ENCODE measurements at regions of chr2 and their contacts with region 1.

Region 1: GRCh38 chr2:64523666-64524603 is at the start of gene AFTPH:
- DNase-seq: peak; percentile 99 to 100 (median 99)
- ATAC-seq: peak; percentile 88
- H3K4me3 ChIP-seq: peak within 1 kb of the TSS; percentile 69 to 83
- H3K4me3 Mint-ChIP-seq: peak within 1 kb of the TSS; percentile 99
- H3K27ac ChIP-seq: peak within 1 kb of the TSS; percentile 77 to 89
- H3K27ac Mint-ChIP-seq: peak within 1 kb of the TSS; percentile 99
- H3K4me1 ChIP-seq: peaks cover 20% of the 10 kb centered on the region
- H3K4me1 Mint-ChIP-seq: peaks cover 38% of the 10 kb centered on the region
- H3K27me3 ChIP-seq: no peaks in the 10 kb centered on the region
- H3K27me3 Mint-ChIP-seq: no peaks in the 10 kb centered on the region
- CTCF ChIP-seq: no peak
- total RNA-seq, gene AFTPH: 23.0 to 25.9 TPM

Region 2: GRCh38 chr2:63588385-63589147 is 935.4 kb before region 1 on chr2 and contains the starts of genes MDH1 and WDPCP:
- CTCF ChIA-PET with region 1: no interaction called
- POLR2A ChIA-PET with region 1: no interaction called
- intact Hi-C with region 1: loop called in 1 of 2 experiments (anchors 2 kb)
- DNase-seq: peak; percentile 84 to 99 (median 91)
- ATAC-seq: peak; percentile 83
- H3K4me3 ChIP-seq: peak within 1 kb of the TSS; percentile 83 to 88
- H3K4me3 Mint-ChIP-seq: peak within 1 kb of the TSS; percentile 90
- H3K27ac ChIP-seq: peak within 1 kb of the TSS; percentile 75 to 95
- H3K27ac Mint-ChIP-seq: peak within 1 kb of the TSS; percentile 95
- H3K4me1 ChIP-seq: peaks cover 19% of the 10 kb centered on the region
- H3K4me1 Mint-ChIP-seq: peaks cover 44% of the 10 kb centered on the region
- H3K27me3 ChIP-seq: no peaks in the 10 kb centered on the region
- H3K27me3 Mint-ChIP-seq: no peaks in the 10 kb centered on the region
- CTCF ChIP-seq: no peak
- total RNA-seq, gene MDH1: 87.2 to 94.8 TPM
- total RNA-seq, gene WDPCP: 9.6 to 11.9 TPM

Region 3: DNA sequence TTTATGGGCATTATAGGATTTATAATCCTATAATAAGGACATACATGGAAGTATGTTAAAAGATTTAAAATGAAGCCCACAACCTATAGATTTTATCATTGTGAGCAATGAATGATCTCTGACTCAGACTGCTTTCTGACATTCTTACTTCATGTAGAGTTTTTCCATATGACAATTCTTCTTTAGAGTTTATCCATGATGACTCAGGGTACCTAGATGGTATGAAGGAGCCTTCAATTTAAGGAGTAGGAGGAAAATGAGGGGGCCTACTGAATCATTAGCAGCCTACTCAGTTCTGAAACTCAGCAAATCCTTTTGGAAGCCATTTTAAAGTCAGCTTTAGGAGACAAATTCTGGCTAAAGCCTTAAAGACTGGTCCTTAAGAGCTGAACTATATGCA is 390.1 kb before region 1 on chr2:
- CTCF ChIA-PET with region 1: no interaction called
- POLR2A ChIA-PET with region 1: no interaction called
- intact Hi-C with region 1: no loop called
- DNase-seq: no peak
- ATAC-seq: no peak
- H3K4me3 ChIP-seq: no peak overlapping the region
- H3K4me3 Mint-ChIP-seq: no peak overlapping the region
- H3K27ac ChIP-seq: no peak overlapping the region
- H3K27ac Mint-ChIP-seq: no peak overlapping the region
- H3K4me1 ChIP-seq: peaks cover 39% of the 10 kb centered on the region
- H3K4me1 Mint-ChIP-seq: peaks cover 69% of the 10 kb centered on the region
- H3K27me3 ChIP-seq: no peaks in the 10 kb centered on the region
- H3K27me3 Mint-ChIP-seq: no peaks in the 10 kb centered on the region
- CTCF ChIP-seq: no peak

Region 4: GRCh38 chr2:64479259-64480117 is 44.4 kb before region 1 on chr2:
- CTCF ChIA-PET with region 1: no interaction called
- POLR2A ChIA-PET with region 1: no interaction called
- intact Hi-C with region 1: no loop called
- DNase-seq: no peak
- ATAC-seq: no peak
- H3K4me3 ChIP-seq: no peak overlapping the region
- H3K4me3 Mint-ChIP-seq: no peak overlapping the region
- H3K27ac ChIP-seq: no peak overlapping the region
- H3K27ac Mint-ChIP-seq: no peak overlapping the region
- H3K4me1 ChIP-seq: no peaks in the 10 kb centered on the region
- H3K4me1 Mint-ChIP-seq: peaks cover 7% of the 10 kb centered on the region
- H3K27me3 ChIP-seq: no peaks in the 10 kb centered on the region
- H3K27me3 Mint-ChIP-seq: no peaks in the 10 kb centered on the region
- CTCF ChIP-seq: no peak

Region 5: GRCh38 chr2:64504774-64505720 is 18.9 kb before region 1 on chr2:
- CTCF ChIA-PET with region 1: interaction called, 11 read pairs
- POLR2A ChIA-PET with region 1: interaction called, 3 read pairs
- intact Hi-C with region 1: no loop called
- DNase-seq: no peak
- ATAC-seq: no peak
- H3K4me3 ChIP-seq: no peak overlapping the region
- H3K4me3 Mint-ChIP-seq: no peak overlapping the region
- H3K27ac ChIP-seq: no peak overlapping the region
- H3K27ac Mint-ChIP-seq: no peak overlapping the region
- H3K4me1 ChIP-seq: no peaks in the 10 kb centered on the region
- H3K4me1 Mint-ChIP-seq: no peaks in the 10 kb centered on the region
- H3K27me3 ChIP-seq: no peaks in the 10 kb centered on the region
- H3K27me3 Mint-ChIP-seq: peaks cover 5% of the 10 kb centered on the region
- CTCF ChIP-seq: no peak

Region 6: GRCh38 chr2:64609227-64609941 is 85.4 kb after region 1 on chr2:
- CTCF ChIA-PET with region 1: interaction called, 13 read pairs
- POLR2A ChIA-PET with region 1: interaction called, 13 read pairs
- intact Hi-C with region 1: loop called in 1 of 2 experiments (anchors 1 kb)
- DNase-seq: peak; percentile 37 to 85 (median 66)
- ATAC-seq: peak; percentile 65
- H3K4me3 ChIP-seq: peak overlapping the region; percentile 56 to 63
- H3K4me3 Mint-ChIP-seq: peak overlapping the region; percentile 79
- H3K27ac ChIP-seq: peak overlapping the region in 1 of 2 experiments; percentile 49
- H3K27ac Mint-ChIP-seq: peak overlapping the region; percentile 66
- H3K4me1 ChIP-seq: peaks cover 26% of the 10 kb centered on the region
- H3K4me1 Mint-ChIP-seq: peaks cover 29% of the 10 kb centered on the region
- H3K27me3 ChIP-seq: no peaks in the 10 kb centered on the region
- H3K27me3 Mint-ChIP-seq: no peaks in the 10 kb centered on the region
- CTCF ChIP-seq: peak; percentile 23

Region 7: DNA sequence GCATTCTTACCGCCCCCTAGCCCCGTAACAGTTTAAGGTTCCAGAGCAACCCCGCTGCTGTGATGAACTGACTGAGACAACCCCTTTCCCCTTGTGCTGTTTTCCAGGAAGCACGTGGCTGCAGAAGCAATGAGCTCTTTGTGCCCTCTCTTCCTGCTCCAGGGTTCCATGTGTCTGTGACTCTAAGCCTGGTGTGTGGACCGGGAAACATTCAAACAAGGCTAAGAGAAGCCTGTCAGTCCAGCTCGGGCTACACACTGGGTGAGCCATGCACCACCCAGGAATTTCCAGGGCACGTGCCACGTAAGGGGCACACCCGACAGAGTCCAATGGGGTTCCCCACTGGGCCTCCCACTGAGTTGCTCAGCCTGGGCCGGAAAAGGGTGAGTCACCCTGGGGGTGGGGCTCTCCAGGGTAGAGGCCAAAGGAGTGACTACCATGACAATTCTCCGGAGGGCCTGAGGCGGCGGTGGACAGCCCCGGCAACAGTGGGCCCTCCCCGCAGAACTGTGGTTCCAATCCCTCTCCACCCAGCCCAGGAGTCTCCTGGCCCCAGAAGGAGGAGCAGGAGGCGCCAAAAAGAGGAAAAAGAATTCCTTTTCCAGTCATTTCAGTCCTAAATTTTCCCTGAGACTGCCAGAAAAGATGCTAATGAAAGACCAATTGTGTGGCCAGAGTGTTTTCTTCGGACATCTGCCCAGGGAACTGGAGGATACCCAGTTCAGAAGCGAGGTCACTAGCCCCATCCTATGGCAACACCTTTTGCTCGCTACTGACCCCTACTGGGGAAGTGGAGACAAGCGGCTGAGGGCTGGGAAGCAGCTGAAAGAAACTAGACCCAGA is 307.4 kb after region 1 on chr2:
- CTCF ChIA-PET with region 1: interaction called, 7 read pairs
- POLR2A ChIA-PET with region 1: no interaction called
- intact Hi-C with region 1: loop called in 1 of 2 experiments (anchors 1 kb)
- DNase-seq: peak; percentile 67 to 91 (median 83)
- ATAC-seq: peak; percentile 88
- H3K4me3 ChIP-seq: peak overlapping the region in 1 of 2 experiments; percentile 32
- H3K4me3 Mint-ChIP-seq: peak overlapping the region; percentile 46
- H3K27ac ChIP-seq: peak overlapping the region in 1 of 2 experiments; percentile 4
- H3K27ac Mint-ChIP-seq: no peak overlapping the region
- H3K4me1 ChIP-seq: peaks cover 10% of the 10 kb centered on the region
- H3K4me1 Mint-ChIP-seq: peaks cover 11% of the 10 kb centered on the region
- H3K27me3 ChIP-seq: peaks cover 0 to 5% of the 10 kb centered on the region in 2 experiments
- H3K27me3 Mint-ChIP-seq: peaks cover 3% of the 10 kb centered on the region
- CTCF ChIP-seq: peak; percentile 94

Region 8: DNA sequence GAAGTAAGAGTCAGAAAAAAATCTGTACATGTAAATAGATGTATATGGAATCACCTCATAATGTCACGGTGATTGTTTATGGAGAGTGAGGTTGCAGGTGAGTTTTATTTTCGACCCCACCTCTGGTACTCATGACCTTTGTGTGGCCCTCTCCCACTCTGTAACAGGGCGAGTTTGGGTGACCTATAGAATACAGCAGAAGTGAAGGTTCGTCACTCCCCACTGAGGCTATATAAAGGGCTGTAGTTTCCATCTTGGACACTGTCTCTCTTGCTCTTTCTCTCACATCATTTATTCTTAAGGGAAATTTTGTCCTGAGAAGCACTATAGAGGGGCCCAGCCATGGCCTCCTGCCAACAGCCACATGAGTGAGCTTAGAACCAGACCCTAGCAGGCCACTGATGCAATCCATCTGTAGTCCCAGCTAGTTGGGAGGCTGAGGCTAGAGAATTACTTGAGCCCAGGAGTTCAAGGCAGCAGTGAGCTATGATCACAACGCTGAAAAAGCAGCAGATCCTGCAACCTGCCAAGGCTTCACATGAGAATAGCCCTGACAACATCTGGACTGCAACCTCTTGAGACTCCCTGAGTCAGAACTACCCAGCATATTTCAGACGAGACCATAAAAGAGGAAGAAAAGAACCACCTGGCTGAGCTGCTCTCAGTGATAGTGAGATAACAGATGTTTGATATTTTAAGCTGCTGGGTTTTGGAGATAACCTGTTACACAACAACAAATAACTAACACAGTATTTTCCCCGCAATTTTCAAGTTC is 391.0 kb after region 1 on chr2:
- CTCF ChIA-PET with region 1: interaction called, 3 read pairs
- POLR2A ChIA-PET with region 1: no interaction called
- intact Hi-C with region 1: loop called in 1 of 2 experiments (anchors 1 kb)
- DNase-seq: no peak
- ATAC-seq: no peak
- H3K4me3 ChIP-seq: no peak overlapping the region
- H3K4me3 Mint-ChIP-seq: no peak overlapping the region
- H3K27ac ChIP-seq: no peak overlapping the region
- H3K27ac Mint-ChIP-seq: no peak overlapping the region
- H3K4me1 ChIP-seq: no peaks in the 10 kb centered on the region
- H3K4me1 Mint-ChIP-seq: peaks cover 23% of the 10 kb centered on the region
- H3K27me3 ChIP-seq: no peaks in the 10 kb centered on the region
- H3K27me3 Mint-ChIP-seq: no peaks in the 10 kb centered on the region
- CTCF ChIP-seq: no peak

Region 9: DNA sequence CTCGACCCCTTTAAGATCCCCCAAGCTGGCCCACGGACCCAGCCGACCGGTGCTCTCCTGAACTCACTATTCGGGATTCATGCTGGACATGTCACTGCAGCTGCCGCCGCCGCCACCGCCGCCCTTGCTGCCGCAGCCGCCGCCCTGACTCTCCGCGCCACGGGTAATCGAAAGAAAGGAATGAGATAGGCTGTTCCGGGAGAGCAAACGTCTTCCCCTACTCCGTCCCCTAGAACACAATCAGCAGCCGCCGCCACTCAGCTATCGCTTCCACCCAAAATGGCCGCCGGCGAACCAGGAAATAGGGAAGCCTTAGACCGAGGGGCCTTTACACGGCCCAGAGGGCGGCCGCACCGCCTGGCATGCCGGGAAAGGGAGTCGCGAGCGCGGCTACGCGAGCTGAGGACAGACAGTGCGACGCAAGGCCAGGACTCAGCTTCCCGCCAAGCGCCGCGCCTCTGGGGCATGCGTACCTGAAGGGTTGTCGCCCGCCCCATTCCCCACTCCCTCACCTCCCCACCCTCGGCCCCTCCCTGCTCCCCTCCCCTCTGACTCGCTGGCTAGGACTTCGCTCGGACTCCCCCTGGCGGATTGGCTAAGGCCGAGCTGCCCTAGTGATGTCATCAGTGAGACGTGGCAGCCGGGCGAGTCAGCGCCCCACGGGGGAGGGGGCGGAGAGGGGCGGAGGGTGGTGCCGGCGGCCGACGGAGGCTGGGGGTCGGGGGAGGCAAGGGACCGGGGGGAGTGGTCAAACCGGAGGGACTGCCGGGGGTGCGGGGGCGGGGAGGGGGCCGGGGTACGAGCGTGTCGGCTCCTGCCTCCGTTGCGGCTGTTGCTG is 606.1 kb after region 1 on chr2 and contains the start of gene RAB1A:
- CTCF ChIA-PET with region 1: no interaction called
- POLR2A ChIA-PET with region 1: interaction called, 4 read pairs
- intact Hi-C with region 1: loop called (anchors 1 to 5 kb)
- DNase-seq: peak; percentile 98 to 100 (median 99)
- ATAC-seq: peak; percentile 94
- H3K4me3 ChIP-seq: peak within 1 kb of the TSS; percentile 87 to 88
- H3K4me3 Mint-ChIP-seq: peak within 1 kb of the TSS; percentile 99
- H3K27ac ChIP-seq: peak within 1 kb of the TSS; percentile 91 to 97
- H3K27ac Mint-ChIP-seq: peak within 1 kb of the TSS; percentile 98
- H3K4me1 ChIP-seq: peaks cover 40% of the 10 kb centered on the region
- H3K4me1 Mint-ChIP-seq: peaks cover 44% of the 10 kb centered on the region
- H3K27me3 ChIP-seq: no peaks in the 10 kb centered on the region
- H3K27me3 Mint-ChIP-seq: no peaks in the 10 kb centered on the region
- CTCF ChIP-seq: no peak
- total RNA-seq, gene RAB1A: 101 to 103 TPM

Region 10: DNA sequence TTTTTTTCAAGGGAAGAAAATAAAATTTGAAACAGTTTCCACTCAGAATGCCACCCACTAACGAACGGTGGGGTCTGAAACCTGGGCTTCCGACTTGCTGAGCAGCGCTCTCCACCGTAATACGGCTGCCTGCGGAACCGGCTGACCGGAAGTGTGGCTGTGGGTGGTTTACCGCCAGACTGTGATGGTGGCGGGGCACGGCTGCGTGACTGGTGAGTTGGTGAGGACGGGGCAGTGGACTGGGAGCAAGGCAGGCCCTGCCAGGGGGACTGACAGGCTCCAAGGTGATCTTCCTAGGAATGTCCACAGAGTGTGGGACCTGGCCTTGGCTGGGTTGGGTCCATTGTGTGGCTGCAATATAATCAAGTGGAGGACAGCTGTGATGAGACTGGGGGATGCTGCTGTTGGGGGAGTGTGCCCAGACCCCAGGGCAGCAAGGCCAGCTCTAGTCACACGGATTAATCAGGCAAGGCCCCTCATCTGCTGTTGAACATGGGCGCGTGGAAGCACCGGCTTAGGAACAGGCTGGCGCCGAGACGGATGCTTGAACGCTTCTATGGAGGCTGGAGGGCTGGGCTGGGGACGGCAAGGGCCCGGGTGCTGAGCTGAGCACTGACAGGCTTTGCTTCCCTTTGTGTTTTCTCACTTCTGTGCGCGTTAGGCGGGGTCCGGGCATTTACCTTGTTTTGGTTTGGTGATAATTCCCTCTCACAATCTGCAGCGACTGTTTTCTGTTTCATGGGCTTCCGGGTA is 1266.2 kb after region 1 on chr2:
- CTCF ChIA-PET with region 1: no interaction called
- POLR2A ChIA-PET with region 1: no interaction called
- intact Hi-C with region 1: no loop called
- DNase-seq: no peak
- ATAC-seq: no peak
- H3K4me3 ChIP-seq: no peak overlapping the region
- H3K4me3 Mint-ChIP-seq: no peak overlapping the region
- H3K27ac ChIP-seq: no peak overlapping the region
- H3K27ac Mint-ChIP-seq: no peak overlapping the region
- H3K4me1 ChIP-seq: no peaks in the 10 kb centered on the region
- H3K4me1 Mint-ChIP-seq: no peaks in the 10 kb centered on the region
- H3K27me3 ChIP-seq: no peaks in the 10 kb centered on the region
- H3K27me3 Mint-ChIP-seq: peaks cover 6% of the 10 kb centered on the region
- CTCF ChIP-seq: no peak

Measured in CD8-positive, alpha-beta T cell (primary cell).